ENCODE measurements at regions of chr2 and their contacts with region 1.

Region 1: DNA sequence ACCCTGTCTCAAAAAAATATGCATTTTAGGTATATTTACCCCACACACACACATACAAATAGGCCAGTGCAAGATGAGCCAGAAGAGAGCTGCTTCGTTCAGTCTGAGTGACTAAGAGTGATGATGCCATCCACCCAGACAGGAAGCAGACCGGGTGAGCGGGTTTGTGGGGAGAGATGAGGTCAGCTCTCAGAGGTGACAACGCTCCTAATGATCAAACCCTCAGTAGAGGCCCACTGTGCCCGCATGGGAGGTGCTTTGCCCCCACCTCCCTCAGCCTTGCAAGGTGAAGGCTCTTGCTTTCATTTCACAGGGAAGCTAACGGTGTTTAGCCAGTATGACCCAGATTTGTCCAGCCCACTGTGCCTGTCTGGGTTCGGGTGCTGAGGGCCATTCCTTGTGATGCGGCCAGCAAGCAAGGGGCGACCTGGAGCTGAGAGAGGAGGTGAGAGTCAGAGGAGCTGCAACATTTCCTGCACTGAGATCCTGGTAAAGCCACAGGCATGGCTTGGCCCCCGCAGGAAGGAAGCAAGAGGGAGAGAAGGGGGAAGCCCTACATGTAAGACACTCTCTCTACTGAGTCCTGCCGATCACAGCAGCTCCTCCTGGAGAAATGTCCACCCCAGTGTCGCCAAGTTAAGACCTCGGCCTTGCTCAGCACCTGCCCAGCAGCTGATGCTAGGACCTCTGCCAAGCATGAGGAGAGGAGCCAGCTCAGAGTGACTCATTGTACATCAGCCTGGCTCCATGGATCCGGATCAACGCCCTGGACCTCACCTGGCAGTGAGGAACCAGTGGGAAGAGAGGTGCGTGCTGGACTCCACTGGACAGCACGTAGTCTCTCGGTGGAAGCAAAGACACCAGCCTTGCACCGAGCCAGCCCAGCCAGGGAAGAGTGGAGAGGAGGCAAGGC is 37.0 kb downstream of the NIFK start:
- DNase-seq: peak; percentile 83
- H3K4me3 Mint-ChIP-seq: peak overlapping the region; percentile 85
- H3K27ac Mint-ChIP-seq: peak overlapping the region; percentile 95
- H3K4me1 Mint-ChIP-seq: peaks cover 48% of the 10 kb centered on the region
- H3K27me3 Mint-ChIP-seq: peaks cover 2% of the 10 kb centered on the region

Region 2: GRCh38 chr2:120661551-120661950 is 1038.1 kb before region 1 on chr2:
- intact Hi-C with region 1: no loop called
- DNase-seq: no peak
- H3K4me3 Mint-ChIP-seq: no peak overlapping the region
- H3K27ac Mint-ChIP-seq: no peak overlapping the region
- H3K4me1 Mint-ChIP-seq: no peaks in the 10 kb centered on the region
- H3K27me3 Mint-ChIP-seq: peaks cover 9% of the 10 kb centered on the region

Region 3: GRCh38 chr2:121155502-121156056 is 544.1 kb before region 1 on chr2:
- intact Hi-C with region 1: no loop called
- DNase-seq: no peak
- H3K4me3 Mint-ChIP-seq: no peak overlapping the region
- H3K27ac Mint-ChIP-seq: no peak overlapping the region
- H3K4me1 Mint-ChIP-seq: no peaks in the 10 kb centered on the region
- H3K27me3 Mint-ChIP-seq: peaks cover 3% of the 10 kb centered on the region

Region 4: DNA sequence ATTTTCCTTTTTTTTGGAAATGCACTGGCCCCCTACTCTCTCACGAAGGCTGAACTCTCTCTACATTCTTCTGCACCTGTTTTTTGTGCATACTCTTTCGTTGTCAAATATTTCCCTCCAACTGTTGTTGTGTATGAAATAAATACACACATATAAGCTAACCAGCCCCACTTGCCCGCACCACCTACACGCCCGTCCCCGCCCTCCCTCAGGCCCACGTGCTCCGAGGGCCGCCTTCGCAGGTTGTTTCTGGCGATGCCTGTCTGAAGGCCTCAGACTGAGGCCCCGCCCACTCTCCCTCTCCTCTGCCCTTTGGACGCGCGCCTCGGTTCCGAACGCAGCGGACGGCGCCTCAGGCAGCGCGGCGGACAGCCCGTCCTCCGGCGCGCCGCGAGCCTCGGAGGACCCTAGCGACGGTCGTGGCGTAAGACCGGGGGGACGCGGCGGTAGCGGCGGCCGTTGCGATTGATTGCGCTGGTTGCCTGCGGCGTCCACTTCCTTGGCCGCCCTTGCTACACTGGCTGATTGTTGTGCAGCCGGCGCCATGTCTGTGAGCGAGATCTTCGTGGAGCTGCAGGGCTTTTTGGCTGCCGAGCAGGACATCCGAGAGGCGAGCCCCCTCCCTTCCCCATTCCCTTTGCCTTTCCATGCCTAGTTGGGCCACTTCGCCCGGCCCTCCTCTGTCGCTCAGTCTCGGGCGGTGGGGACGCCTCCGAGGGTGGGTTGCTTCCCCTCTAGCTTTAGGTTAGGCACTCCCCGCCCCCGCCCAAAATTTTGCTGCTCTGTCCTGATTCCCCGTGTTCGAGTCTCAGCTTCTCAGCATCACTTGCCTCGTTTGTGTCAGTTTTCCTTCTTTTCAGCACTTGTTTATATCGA is 55.8 kb after region 1 on chr2 and contains the start of gene TSN:
- intact Hi-C with region 1: loop called (anchors 1 kb)
- DNase-seq: peak; percentile 97
- H3K4me3 Mint-ChIP-seq: peak within 1 kb of the TSS; percentile 94
- H3K27ac Mint-ChIP-seq: peak within 1 kb of the TSS; percentile 92
- H3K4me1 Mint-ChIP-seq: peaks cover 26% of the 10 kb centered on the region
- H3K27me3 Mint-ChIP-seq: no peaks in the 10 kb centered on the region
- total RNA-seq, gene TSN: 72.3 and 80.1 TPM in 2 replicates

Measured in activated T-helper 1 cell treated with anti-CD3 and anti-CD28 coated beads, Interleukin-12 subunit alpha, Interleukin-12 subunit beta, Interleukin-2, Interleukin-4 antibody, amounts not matched to agents 30 ng/mL and 10 ng/mL and 1 ng/mL, durations not matched to agents 14 hours and 24 hours and 36 hours (primary cell).